ENCODE measurements at regions of chr2 and their contacts with region 1.

Region 1: GRCh38 chr2:40244675-40245074 is 207.2 kb downstream of the SLC8A1 start:
- DNase-seq: peak; percentile 27 to 60
- H3K4me3 ChIP-seq: no peak overlapping the region
- H3K27ac ChIP-seq: no peak overlapping the region
- H3K4me1 ChIP-seq: peaks cover 0 to 7% (median 0%) of the 10 kb centered on the region in 4 experiments; a peak in 2 of 7 replicates
- H3K27me3 ChIP-seq: no peaks in the 10 kb centered on the region
- CTCF ChIP-seq: peak; percentile 42 to 72 (median 65)
- EP300 ChIP-seq: no peak
- POLR2A ChIP-seq: no peak
- RAD21 ChIP-seq: peak; percentile 72 to 73

Region 2: DNA sequence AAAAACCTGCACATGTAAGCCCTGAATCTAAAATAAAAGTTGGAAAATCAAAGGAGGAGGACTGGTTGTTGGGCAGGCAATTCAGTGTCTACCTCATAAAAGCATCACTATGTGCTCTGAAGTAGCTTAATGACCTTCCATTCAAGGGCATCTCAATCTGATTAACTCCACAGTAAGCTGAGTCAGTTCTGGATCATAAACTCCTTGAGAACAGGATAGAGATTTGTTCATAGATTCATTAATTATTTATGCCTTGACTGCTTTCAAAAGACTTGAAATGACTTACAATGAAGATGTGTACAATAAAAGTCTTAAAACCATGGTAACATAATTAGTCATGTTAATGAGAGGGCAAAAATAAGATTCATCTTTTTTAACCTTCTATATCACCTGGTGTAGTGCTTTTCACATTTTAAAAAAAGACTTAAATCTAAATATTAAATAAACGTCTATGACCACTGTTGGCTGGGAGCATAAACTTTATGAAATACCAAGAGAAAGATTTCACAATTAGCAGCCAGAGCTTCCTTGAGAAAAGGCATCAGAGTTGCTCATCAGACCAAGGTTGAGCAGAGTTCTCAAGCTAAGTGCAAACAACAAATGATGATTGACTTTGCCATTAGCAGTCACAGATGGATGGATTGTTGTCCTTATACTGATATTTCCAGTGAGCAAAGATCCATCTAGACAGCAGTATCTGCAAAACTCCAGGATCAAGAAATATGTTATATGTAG is 228.4 kb before region 1 on chr2:
- CTCF ChIA-PET with region 1: no interaction called
- POLR2A ChIA-PET with region 1: no interaction called
- DNase-seq: no peak
- H3K4me3 ChIP-seq: no peak overlapping the region
- H3K27ac ChIP-seq: no peak overlapping the region
- H3K4me1 ChIP-seq: no peaks in the 10 kb centered on the region
- H3K27me3 ChIP-seq: no peaks in the 10 kb centered on the region
- CTCF ChIP-seq: no peak
- EP300 ChIP-seq: no peak
- POLR2A ChIP-seq: no peak
- RAD21 ChIP-seq: no peak

Region 3: DNA sequence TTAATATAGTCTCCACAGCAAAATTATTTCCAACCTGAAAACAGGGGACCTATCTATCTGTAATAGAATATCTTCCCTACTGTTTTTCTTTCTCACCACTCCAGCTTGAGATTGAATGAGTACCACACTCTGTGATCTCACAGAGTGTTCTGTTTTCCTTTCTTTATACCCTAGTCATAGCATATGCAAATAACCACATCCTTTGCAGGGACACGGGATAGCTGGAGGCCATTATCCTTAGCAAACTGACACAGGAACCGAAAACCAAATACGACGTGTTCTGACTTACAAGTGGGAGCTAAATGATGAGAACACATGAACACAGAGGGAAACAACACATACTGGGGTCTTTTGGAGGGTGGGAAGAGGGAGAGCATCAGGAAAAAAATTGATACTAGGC is 17.5 kb before region 1 on chr2:
- CTCF ChIA-PET with region 1: interaction called, 29 read pairs
- POLR2A ChIA-PET with region 1: no interaction called
- DNase-seq: no peak
- H3K4me3 ChIP-seq: no peak overlapping the region
- H3K27ac ChIP-seq: no peak overlapping the region
- H3K4me1 ChIP-seq: peaks cover 0 to 5% (median 3%) of the 10 kb centered on the region in 4 experiments; a peak in 4 of 7 replicates
- H3K27me3 ChIP-seq: no peaks in the 10 kb centered on the region
- CTCF ChIP-seq: no peak
- EP300 ChIP-seq: no peak
- POLR2A ChIP-seq: no peak
- RAD21 ChIP-seq: no peak

Region 4: DNA sequence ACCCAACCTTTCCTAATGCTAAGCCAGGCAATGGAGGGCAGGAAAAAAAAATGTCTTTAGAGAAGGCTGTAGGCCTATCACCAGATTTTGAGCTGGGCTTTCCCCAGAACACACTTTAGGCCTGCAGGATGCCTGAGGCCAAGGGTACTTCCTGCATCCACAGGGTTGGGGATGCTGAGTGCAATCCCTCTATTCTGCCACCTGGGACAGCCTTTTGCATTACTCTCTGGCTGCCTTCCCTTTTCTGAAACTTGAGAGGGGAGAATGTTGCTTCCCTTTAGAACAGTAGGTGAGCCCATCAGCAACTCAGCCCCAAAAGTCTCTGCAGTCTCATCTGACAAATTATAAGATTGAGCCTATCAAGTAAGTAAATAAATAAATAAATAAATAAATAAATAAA is 12.0 kb after region 1 on chr2:
- CTCF ChIA-PET with region 1: interaction called, 23 read pairs
- POLR2A ChIA-PET with region 1: no interaction called
- DNase-seq: peak in 1 of 2 experiments; percentile 51
- H3K4me3 ChIP-seq: no peak overlapping the region
- H3K27ac ChIP-seq: no peak overlapping the region
- H3K4me1 ChIP-seq: no peaks in the 10 kb centered on the region
- H3K27me3 ChIP-seq: no peaks in the 10 kb centered on the region
- CTCF ChIP-seq: peak; percentile 52 to 74 (median 68)
- EP300 ChIP-seq: no peak
- POLR2A ChIP-seq: no peak
- RAD21 ChIP-seq: peak; percentile 55 to 59

Region 5: DNA sequence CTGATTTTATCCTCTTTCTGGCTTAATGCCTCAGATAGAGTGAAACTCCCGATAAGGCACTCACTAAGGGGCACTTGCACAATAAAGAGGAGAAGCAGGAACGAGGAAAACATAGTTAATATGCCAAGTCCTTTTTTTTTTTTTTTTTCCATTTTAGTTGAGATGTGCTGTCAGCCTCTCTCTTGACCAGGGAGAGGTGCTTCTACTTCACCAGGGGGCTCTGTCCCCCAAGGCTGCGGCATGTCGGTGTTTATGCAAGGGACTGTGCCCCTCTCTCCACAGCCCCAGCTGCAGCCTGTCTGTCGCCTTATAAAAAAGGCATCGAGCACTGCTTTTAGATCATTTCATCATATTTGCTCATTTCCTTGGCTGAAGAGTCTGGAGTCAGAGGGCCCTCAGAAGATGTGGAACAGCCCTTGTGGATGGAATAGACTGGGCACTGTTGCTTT is 29.1 kb after region 1 on chr2:
- CTCF ChIA-PET with region 1: interaction called, 10 read pairs
- POLR2A ChIA-PET with region 1: interaction called, 3 read pairs
- DNase-seq: no peak
- H3K4me3 ChIP-seq: no peak overlapping the region
- H3K27ac ChIP-seq: no peak overlapping the region
- H3K4me1 ChIP-seq: peaks cover 0 to 4% (median 0%) of the 10 kb centered on the region in 4 experiments; a peak in 1 of 7 replicates
- H3K27me3 ChIP-seq: no peaks in the 10 kb centered on the region
- CTCF ChIP-seq: no peak
- EP300 ChIP-seq: no peak
- POLR2A ChIP-seq: no peak
- RAD21 ChIP-seq: peak; percentile 24 to 27; a peak in 2 of 4 replicates